Sigmoid colon (tissue), 7 donors: ENCODE measurements at regions of chr1 and their contacts with region 1.

Region 1: GRCh38 chr1:50774759-50775351 is 185.2 kb downstream of the FAF1 start:
- DNase-seq: no peak
- H3K4me3 ChIP-seq: no peak overlapping the region
- H3K27ac ChIP-seq: no peak overlapping the region
- H3K4me1 ChIP-seq: no peaks in the 10 kb centered on the region
- H3K27me3 ChIP-seq: no peaks in the 10 kb centered on the region
- CTCF ChIP-seq: peak; percentile 22 to 74 (median 63)
- EP300 ChIP-seq: no peak
- POLR2A ChIP-seq: no peak

Region 2: GRCh38 chr1:50666849-50667248 is 108.0 kb before region 1 on chr1:
- intact Hi-C with region 1: no loop called
- DNase-seq: no peak
- H3K4me3 ChIP-seq: no peak overlapping the region
- H3K27ac ChIP-seq: no peak overlapping the region
- H3K4me1 ChIP-seq: peaks cover 0 to 35% (median 20%) of the 10 kb centered on the region in 4 donors
- H3K27me3 ChIP-seq: no peaks in the 10 kb centered on the region
- CTCF ChIP-seq: no peak
- EP300 ChIP-seq: no peak
- POLR2A ChIP-seq: no peak

Region 3: DNA sequence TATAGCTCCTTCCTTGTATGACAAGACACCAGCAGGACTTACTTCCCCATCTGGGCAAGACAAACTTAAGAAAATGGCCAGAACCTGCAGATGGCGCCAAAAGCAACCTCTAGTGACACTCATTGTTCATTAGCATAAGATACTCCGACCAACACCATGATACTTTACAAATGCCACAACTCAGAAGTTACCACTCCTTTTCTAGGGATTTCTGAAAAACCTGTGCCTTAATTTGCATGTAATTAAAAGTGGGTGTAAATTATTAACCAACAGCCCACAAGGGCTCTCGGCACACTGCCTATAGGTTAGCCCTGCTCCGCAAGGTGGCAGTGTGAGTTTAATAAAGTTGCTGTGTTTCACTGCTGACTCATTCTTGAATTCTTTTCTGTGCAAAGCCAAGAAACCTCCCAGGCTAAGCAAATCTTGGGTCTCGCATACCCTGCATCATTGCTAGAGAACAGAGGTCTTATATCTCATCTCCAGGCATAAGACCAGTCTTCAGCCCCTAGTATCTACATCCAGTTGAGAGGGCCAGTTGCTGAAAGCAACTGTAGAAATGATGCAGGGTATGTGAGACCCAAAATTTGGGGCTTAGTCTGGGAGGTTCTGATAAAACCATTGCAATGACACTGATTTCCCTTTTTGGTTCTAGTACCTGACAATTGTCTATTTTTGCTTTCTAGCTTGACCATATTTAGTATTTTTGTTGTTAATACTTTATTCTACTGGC is 98.8 kb after region 1 on chr1:
- intact Hi-C with region 1: no loop called
- DNase-seq: no peak
- H3K4me3 ChIP-seq: no peak overlapping the region
- H3K27ac ChIP-seq: no peak overlapping the region
- H3K4me1 ChIP-seq: peaks cover 0 to 4% (median 0%) of the 10 kb centered on the region in 4 donors
- H3K27me3 ChIP-seq: no peaks in the 10 kb centered on the region
- CTCF ChIP-seq: peak in 2 of 4 experiments; percentile 21 to 24
- EP300 ChIP-seq: no peak
- POLR2A ChIP-seq: no peak

Region 4: GRCh38 chr1:50986655-50987054 is 211.8 kb after region 1 on chr1:
- intact Hi-C with region 1: no loop called
- DNase-seq: no peak
- H3K4me3 ChIP-seq: no peak overlapping the region
- H3K27ac ChIP-seq: no peak overlapping the region
- H3K4me1 ChIP-seq: peaks cover 0 to 4% (median 0%) of the 10 kb centered on the region in 4 donors
- H3K27me3 ChIP-seq: no peaks in the 10 kb centered on the region
- CTCF ChIP-seq: no peak
- EP300 ChIP-seq: no peak
- POLR2A ChIP-seq: no peak

Region 5: DNA sequence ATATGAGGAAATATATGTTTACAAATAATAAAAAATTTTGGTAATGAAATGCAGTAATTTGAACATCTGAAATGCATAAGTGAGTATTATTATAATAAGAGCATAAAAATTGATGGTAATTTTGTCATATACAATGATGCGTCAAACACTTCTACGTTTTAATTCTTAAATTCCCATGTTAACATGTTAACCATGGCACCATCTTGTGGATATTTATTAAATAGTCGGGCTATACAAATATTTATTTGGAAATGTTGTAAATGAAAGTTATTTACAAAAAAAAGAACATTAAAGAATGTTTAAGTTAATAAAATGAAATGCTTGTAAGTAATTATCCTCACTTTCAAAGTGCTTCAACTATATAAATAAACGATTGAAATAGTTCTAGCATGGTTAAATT is 270.0 kb after region 1 on chr1:
- intact Hi-C with region 1: loop called (anchors 5 kb)
- DNase-seq: no peak
- H3K4me3 ChIP-seq: no peak overlapping the region
- H3K27ac ChIP-seq: no peak overlapping the region
- H3K4me1 ChIP-seq: peaks cover 0 to 5% (median 0%) of the 10 kb centered on the region in 4 donors
- H3K27me3 ChIP-seq: no peaks in the 10 kb centered on the region
- CTCF ChIP-seq: peak in 1 of 4 experiments; percentile 30
- EP300 ChIP-seq: no peak
- POLR2A ChIP-seq: no peak

Region 6: DNA sequence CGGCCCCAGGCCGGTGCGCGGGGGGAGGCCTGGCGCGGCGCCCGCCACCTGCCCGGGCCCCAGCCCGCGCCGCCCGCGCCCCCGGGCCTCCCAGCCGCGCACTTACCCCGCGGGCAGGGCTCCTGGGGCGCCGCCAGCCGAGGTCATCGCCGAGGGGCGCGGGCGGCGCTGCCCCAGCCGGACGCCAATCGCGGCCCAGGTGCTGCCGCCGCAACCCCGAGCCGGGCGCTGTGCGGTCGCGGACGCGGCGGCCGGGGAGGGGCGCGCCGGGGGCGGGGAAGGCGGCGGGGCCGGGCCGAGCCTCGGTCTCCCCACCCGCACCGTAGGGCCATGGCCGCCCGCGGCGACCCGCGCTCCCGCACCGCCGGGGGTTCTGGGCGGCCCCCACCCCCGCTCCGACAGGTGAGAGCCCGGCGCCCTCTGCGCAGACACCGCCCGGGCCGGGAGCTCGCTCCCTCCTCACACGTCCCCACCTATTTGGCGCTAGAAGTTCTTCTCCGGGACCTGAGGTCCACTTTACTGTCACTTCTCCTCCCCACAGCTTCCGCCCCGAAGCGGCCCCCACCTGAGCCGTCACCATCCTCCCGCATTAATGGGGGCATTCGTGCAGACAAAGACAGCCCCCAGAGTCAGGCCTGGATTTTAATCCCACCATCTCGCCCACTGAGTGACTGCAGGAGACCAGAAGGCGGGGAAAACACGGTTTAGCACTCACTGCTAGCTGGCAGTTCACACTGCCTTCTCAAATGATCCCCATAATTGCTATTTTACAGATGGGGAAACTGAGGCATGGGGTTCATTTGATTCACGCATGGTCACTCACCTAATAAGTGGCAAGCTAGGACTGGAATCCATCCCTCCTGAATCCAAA is 555.7 kb after region 1 on chr1 and contains the start of gene TTC39A:
- intact Hi-C with region 1: no loop called
- DNase-seq: no peak
- H3K4me3 ChIP-seq: peak within 1 kb of the TSS; percentile 4 to 54 (median 48)
- H3K27ac ChIP-seq: no peak within 1 kb of the TSS
- H3K4me1 ChIP-seq: peaks cover 0 to 14% (median 10%) of the 10 kb centered on the region in 4 donors
- H3K27me3 ChIP-seq: peaks cover 0 to 15% (median 7%) of the 10 kb centered on the region in 3 donors
- CTCF ChIP-seq: no peak
- EP300 ChIP-seq: no peak
- POLR2A ChIP-seq: no peak
- total RNA-seq, gene TTC39A: under 0.01 to 1.4 (median 0.14) TPM in 3 of 4 donors, not detected in the other